HEK293T (cell line): ENCODE measurements at regions of chr20 and their contacts with region 1.

Region 1: GRCh38 chr20:62642040-62642665 is at the start of gene SLCO4A1:
- DNase-seq: peak; percentile 84

Region 2: GRCh38 chr20:62623488-62624324 is 18.4 kb before region 1 on chr20:
- CTCF ChIA-PET with region 1: no interaction called
- POLR2A ChIA-PET with region 1: interaction called, 11 read pairs
- DNase-seq: peak; percentile 78